Activated T-helper 2 cell treated with anti-CD3 and anti-CD28 coated beads, Interferon-gamma antibody, Interleukin-2, Interleukin-4, amounts not matched to agents 10 μg/mL and 5 μg/mL and 100 μg/mL, durations not matched to agents 14 hours and 24 hours and 36 hours (primary cell): ENCODE measurements at regions of chrX and their contacts with region 1.

Region 1: DNA sequence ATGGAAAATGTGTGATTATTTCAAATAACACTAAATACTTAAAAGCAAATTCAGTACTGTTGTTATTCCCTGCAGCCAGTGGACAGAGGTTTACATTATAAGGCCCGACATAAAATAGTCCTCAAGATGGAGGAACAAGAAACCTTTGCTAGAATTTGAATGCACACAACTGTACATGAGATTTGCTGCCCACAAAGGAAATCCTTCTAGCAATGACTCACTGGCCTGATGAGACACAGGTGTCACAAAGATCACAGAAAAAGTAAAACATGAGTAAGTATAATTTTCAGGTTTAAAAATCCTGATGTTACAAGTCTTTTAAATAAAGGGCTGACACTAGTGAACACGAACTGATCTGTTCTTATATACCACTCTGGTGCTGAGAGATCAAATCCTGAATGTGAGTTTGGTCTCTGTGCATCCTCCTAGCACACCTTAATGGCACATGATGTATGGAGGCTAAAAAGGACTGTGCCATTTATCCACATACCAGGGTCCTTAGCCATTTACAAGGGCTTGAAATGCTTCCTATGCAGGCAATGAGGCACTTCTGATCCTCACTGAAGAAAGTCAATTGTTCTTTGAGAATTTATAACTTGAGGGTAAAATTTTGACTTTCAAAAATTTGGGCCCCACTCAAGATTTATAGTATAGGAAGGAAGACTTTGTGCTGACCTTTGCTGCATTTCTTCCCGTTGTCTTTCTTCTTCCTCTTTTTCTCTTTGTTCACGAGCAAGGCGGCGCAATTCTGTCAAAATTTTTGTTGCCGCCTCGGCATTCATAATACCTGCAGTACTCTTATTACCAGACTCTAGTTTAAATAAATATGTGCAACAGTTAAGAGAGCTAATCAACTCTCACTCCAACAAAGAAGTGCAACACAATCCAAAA is 23.0 kb downstream of the MAP7D3 start:
- DNase-seq: no peak
- H3K4me3 Mint-ChIP-seq: no peak overlapping the region
- H3K27ac Mint-ChIP-seq: no peak overlapping the region
- H3K4me1 Mint-ChIP-seq: peaks cover 21% of the 10 kb centered on the region
- H3K27me3 Mint-ChIP-seq: no peaks in the 10 kb centered on the region

Region 2: GRCh38 chrX:136162831-136163570 is 65.2 kb before region 1 on chrX:
- intact Hi-C with region 1: no loop called
- DNase-seq: peak; percentile 15
- H3K4me3 Mint-ChIP-seq: no peak overlapping the region
- H3K27ac Mint-ChIP-seq: no peak overlapping the region
- H3K4me1 Mint-ChIP-seq: peaks cover 2% of the 10 kb centered on the region
- H3K27me3 Mint-ChIP-seq: no peaks in the 10 kb centered on the region

Region 3: GRCh38 chrX:136251041-136251991 is 23.1 kb after region 1 on chrX and contains the start of gene MAP7D3:
- intact Hi-C with region 1: loop called (anchors 2 kb)
- DNase-seq: peak; percentile 58
- H3K4me3 Mint-ChIP-seq: peak within 1 kb of the TSS; percentile 88
- H3K27ac Mint-ChIP-seq: peak within 1 kb of the TSS; percentile 90
- H3K4me1 Mint-ChIP-seq: peaks cover 13% of the 10 kb centered on the region
- H3K27me3 Mint-ChIP-seq: no peaks in the 10 kb centered on the region
- total RNA-seq, gene MAP7D3: 28.1 and 28.6 TPM in 2 replicates

Region 4: DNA sequence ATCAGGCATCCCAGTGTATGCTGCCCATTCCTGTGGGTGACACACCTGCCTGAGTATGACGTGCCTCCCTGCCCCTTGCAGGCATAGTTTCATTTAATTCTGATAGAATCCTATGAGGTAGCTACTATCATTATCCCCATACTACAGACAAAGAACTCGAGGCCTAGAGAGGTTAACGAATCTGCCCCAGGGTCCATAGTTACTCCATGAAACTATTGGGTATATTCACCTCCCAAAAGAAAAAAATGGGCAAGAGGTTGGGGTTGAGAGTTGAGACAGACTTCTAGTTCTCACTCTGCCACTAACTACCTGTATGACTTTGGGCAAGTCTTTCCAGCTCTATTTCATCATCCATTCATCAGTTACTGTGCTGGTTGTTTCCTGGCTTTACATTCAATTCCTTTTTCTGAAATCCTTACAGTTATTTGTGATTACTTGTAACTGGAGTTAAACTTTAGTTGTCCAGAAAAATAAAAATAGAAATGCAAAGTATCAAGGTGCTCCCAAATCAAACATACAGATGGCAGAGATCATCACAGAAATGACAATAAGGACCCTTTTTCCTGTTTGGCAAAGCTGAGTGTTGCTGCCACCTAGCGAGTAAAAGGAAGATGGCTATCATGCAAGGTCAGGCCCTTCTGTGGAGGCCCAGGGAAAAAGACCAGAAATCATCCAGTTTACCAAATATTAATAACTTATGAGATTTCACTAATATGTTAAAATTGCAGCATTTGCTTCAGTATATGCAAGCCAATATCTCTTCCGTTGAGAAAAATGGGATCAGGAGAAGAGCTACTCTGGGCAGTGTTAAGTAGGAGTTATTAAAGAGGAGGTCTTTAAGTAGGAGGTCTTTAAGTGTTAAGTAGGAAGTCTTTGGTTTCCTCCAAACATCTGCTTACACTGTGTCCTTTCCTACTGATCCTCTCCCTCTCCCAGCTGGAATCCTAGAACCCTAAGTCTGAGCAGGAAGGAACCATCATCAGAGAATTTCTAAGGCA is 40.2 kb after region 1 on chrX:
- intact Hi-C with region 1: loop called (anchors 5 kb)
- DNase-seq: peak; percentile 9
- H3K4me3 Mint-ChIP-seq: no peak overlapping the region
- H3K27ac Mint-ChIP-seq: no peak overlapping the region
- H3K4me1 Mint-ChIP-seq: peaks cover 3% of the 10 kb centered on the region
- H3K27me3 Mint-ChIP-seq: no peaks in the 10 kb centered on the region